ENCODE measurements at regions of chr1 and their contacts with region 1.

Region 1: GRCh38 chr1:110460253-110461220 is 9.6 kb downstream of the PROK1 start:
- DNase-seq: peak; percentile 69 to 76 (median 69)
- H3K4me3 ChIP-seq: no peak overlapping the region
- H3K4me3 Mint-ChIP-seq: no peak overlapping the region
- H3K27ac ChIP-seq: no peak overlapping the region
- H3K27ac Mint-ChIP-seq: no peak overlapping the region
- H3K4me1 ChIP-seq: no peaks in the 10 kb centered on the region
- H3K4me1 Mint-ChIP-seq: no peaks in the 10 kb centered on the region
- H3K27me3 ChIP-seq: no peaks in the 10 kb centered on the region
- H3K27me3 Mint-ChIP-seq: peaks cover 2 to 5% (median 4%) of the 10 kb centered on the region in 3 donors
- CTCF ChIP-seq: peak; percentile 96

Region 2: DNA sequence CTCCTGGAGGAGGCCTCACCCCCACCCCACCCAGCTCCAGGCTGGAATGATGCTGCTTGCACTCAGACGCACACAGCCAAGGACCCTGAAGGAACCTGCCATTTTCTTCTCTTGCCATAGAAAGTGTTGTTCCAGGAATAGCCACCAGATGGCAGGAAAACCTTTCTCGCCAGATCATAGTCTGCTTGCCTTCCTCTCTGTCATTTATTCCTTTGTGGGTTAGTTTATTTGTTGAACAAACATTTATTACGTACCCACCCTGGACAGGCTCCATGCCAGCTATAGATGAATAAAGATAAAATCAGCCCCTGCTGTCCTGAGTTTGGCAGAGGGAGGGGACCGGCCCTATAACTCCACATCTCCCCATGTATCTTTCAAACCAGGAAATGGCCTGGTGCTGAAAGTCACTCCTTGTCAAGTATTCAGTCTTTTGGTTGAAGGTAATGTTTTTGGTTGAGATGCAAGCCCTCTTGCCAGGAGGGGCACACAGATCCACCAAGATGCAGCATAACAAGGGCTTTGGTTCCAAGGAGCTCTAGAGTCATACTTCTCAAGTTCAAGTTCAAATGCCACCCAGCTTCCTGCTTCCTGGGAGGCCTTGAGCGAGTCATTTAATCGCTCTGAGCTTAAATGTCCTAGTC is 257.4 kb before region 1 on chr1:
- intact Hi-C with region 1: loop called (anchors 5 kb)
- DNase-seq: peak; percentile 56 to 68 (median 63)
- H3K4me3 ChIP-seq: no peak overlapping the region
- H3K4me3 Mint-ChIP-seq: no peak overlapping the region
- H3K27ac ChIP-seq: no peak overlapping the region
- H3K27ac Mint-ChIP-seq: peak overlapping the region in 3 of 7 donors; percentile 15 to 77 (median 62)
- H3K4me1 ChIP-seq: no peaks in the 10 kb centered on the region
- H3K4me1 Mint-ChIP-seq: peaks cover 4% of the 10 kb centered on the region
- H3K27me3 ChIP-seq: no peaks in the 10 kb centered on the region
- H3K27me3 Mint-ChIP-seq: peaks cover 0 to 4% (median 2%) of the 10 kb centered on the region in 3 donors
- CTCF ChIP-seq: peak; percentile 88

Region 3: GRCh38 chr1:110209715-110210603 is 250.6 kb before region 1 on chr1 and contains the start of gene KCNC4:
- intact Hi-C with region 1: loop called in 1 of 2 experiments (anchors 5 kb)
- DNase-seq: peak; percentile 80 to 89 (median 82)
- H3K4me3 ChIP-seq: peak within 1 kb of the TSS; percentile 51 to 79 (median 54)
- H3K4me3 Mint-ChIP-seq: peak within 1 kb of the TSS; percentile 89 to 94
- H3K27ac ChIP-seq: peak within 1 kb of the TSS; percentile 74 to 76
- H3K27ac Mint-ChIP-seq: peak within 1 kb of the TSS; percentile 69 to 97 (median 89)
- H3K4me1 ChIP-seq: peaks cover 15 to 34% of the 10 kb centered on the region in 2 donors
- H3K4me1 Mint-ChIP-seq: peaks cover 25% of the 10 kb centered on the region
- H3K27me3 ChIP-seq: peaks cover 12 to 31% of the 10 kb centered on the region in 2 donors
- H3K27me3 Mint-ChIP-seq: peaks cover 26 to 36% (median 27%) of the 10 kb centered on the region in 3 donors
- CTCF ChIP-seq: no peak
- polyA plus RNA-seq, gene KCNC4: 0.03 to 0.56 (median 0.12) TPM

Region 4: DNA sequence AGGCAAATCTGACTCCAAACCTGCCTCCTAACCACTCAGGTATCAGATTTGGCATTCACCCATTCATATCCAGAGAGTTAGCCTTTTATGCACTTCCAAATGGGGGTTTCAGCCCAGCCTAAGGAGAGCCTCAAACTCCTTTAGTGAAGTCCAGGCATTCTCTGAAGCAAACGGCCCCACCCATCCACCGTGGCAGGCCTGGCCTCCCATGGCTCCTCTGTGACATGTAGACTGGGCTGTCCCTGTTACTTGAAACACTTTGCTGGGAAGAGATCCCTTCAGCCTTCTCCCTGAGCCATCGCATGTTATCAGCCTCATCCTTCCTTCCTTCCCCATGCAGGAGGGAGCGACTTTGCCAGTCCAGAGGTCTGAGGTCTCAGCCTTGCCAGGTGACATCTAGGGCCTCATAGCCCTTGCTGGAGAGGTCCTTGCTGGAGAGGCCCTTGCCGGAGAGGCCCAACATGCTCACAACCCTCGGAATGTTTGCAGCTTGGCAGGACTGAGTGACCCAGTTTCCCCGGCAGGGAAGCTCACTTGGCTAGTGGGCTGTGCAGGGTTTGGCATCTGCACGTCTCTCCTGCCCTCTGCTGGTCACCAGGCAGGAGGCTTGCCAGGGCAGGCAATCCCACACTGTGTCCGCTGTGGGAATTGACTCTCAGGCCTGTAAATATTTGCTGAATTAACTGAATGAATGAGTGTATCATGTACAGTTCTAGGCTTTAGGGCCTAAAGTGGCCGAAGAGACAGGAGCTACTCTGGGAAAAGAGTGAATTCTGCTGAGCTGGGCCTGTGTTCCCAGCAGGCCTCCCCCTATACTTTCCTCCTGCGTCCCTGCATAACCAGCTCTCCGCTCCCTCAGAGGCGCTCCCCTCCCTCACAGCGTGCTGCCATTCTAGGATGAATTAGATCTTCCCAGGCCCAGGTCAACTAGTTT is 148.1 kb before region 1 on chr1:
- intact Hi-C with region 1: loop called in 1 of 2 experiments (anchors 10 kb)
- DNase-seq: peak; percentile 62 to 75 (median 65)
- H3K4me3 ChIP-seq: no peak overlapping the region
- H3K4me3 Mint-ChIP-seq: no peak overlapping the region
- H3K27ac ChIP-seq: no peak overlapping the region
- H3K27ac Mint-ChIP-seq: no peak overlapping the region
- H3K4me1 ChIP-seq: peaks cover 3 to 9% of the 10 kb centered on the region in 2 donors
- H3K4me1 Mint-ChIP-seq: peaks cover 11% of the 10 kb centered on the region
- H3K27me3 ChIP-seq: no peaks in the 10 kb centered on the region
- H3K27me3 Mint-ChIP-seq: peaks cover 1 to 5% (median 2%) of the 10 kb centered on the region in 3 donors
- CTCF ChIP-seq: peak; percentile 95

Region 5: GRCh38 chr1:110412576-110412975 is 48.0 kb before region 1 on chr1:
- intact Hi-C with region 1: loop called (anchors 1 to 2 kb)
- DNase-seq: peak; percentile 77 to 83 (median 77)
- H3K4me3 ChIP-seq: no peak overlapping the region
- H3K4me3 Mint-ChIP-seq: no peak overlapping the region
- H3K27ac ChIP-seq: no peak overlapping the region
- H3K27ac Mint-ChIP-seq: peak overlapping the region in 2 of 7 donors; percentile 48 to 87
- H3K4me1 ChIP-seq: peaks cover 12 to 15% of the 10 kb centered on the region in 2 donors
- H3K4me1 Mint-ChIP-seq: peaks cover 15% of the 10 kb centered on the region
- H3K27me3 ChIP-seq: no peaks in the 10 kb centered on the region
- H3K27me3 Mint-ChIP-seq: peaks cover 0 to 3% (median 2%) of the 10 kb centered on the region in 3 donors
- CTCF ChIP-seq: peak; percentile 86